CD8-positive, alpha-beta T cell (primary cell): ENCODE measurements at regions of chr6 and their contacts with region 1.

Region 1: GRCh38 chr6:40328405-40328987 is 258.7 kb downstream of the LRFN2 start:
- DNase-seq: peak in 6 of 9 experiments; percentile 12 to 65 (median 48)
- ATAC-seq: no peak
- H3K4me3 ChIP-seq: no peak overlapping the region
- H3K4me3 Mint-ChIP-seq: no peak overlapping the region
- H3K27ac ChIP-seq: no peak overlapping the region
- H3K27ac Mint-ChIP-seq: no peak overlapping the region
- H3K4me1 ChIP-seq: no peaks in the 10 kb centered on the region
- H3K4me1 Mint-ChIP-seq: no peaks in the 10 kb centered on the region
- H3K27me3 ChIP-seq: no peaks in the 10 kb centered on the region
- H3K27me3 Mint-ChIP-seq: peaks cover 20% of the 10 kb centered on the region
- CTCF ChIP-seq: peak; percentile 60

Region 2: GRCh38 chr6:40411881-40412280 is 83.4 kb after region 1 on chr6:
- CTCF ChIA-PET with region 1: no interaction called
- POLR2A ChIA-PET with region 1: no interaction called
- intact Hi-C with region 1: no loop called
- DNase-seq: no peak
- ATAC-seq: no peak
- H3K4me3 ChIP-seq: no peak overlapping the region
- H3K4me3 Mint-ChIP-seq: no peak overlapping the region
- H3K27ac ChIP-seq: no peak overlapping the region
- H3K27ac Mint-ChIP-seq: no peak overlapping the region
- H3K4me1 ChIP-seq: no peaks in the 10 kb centered on the region
- H3K4me1 Mint-ChIP-seq: no peaks in the 10 kb centered on the region
- H3K27me3 ChIP-seq: no peaks in the 10 kb centered on the region
- H3K27me3 Mint-ChIP-seq: no peaks in the 10 kb centered on the region
- CTCF ChIP-seq: no peak

Region 3: DNA sequence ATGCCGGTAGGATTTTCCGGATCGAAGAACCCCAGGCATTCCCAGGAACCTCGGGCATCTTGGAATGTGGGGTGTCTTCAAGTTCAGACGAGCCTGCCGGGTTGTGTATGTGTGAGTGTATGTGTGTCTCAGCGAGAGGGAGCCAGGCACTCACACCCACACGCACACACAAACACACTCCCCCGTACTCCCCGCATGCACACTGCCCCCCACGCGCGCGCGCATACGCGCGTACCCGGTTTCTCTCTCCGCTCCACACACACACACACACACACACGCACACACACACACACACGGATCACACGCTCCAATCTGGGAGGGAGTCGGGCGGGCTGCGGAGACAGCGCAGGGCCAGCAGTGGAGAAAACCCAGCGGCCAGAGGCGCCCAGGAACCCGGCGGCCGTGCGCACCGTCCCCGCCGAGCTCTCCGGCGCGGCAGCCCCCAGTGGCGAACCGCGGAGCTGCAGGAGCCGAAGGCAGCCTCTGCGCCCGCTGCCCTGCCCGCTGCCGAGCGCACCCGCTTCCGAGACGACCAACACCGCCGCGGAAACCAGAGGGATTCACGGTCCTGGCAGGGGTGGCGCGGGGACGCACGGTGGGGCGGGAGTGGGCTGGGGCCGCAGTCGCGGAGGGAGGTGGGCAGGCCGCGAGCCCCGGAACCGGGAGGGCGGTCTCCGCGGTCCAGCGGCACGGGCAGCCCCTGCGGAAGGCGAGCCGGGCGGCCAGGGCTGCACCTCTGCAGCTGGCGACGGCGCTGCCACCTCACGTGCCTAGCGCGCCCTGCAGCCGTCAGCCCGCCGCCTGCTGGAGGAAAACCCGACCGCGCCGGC is 259.0 kb after region 1 on chr6 and contains the start of gene LRFN2:
- CTCF ChIA-PET with region 1: interaction called, 17 read pairs
- POLR2A ChIA-PET with region 1: no interaction called
- intact Hi-C with region 1: loop called in 1 of 2 experiments (anchors 1 kb)
- DNase-seq: peak; percentile 27 to 79 (median 60)
- ATAC-seq: peak; percentile 88
- H3K4me3 ChIP-seq: peak within 1 kb of the TSS; percentile 50 to 53
- H3K4me3 Mint-ChIP-seq: peak within 1 kb of the TSS; percentile 79
- H3K27ac ChIP-seq: peak within 1 kb of the TSS in 1 of 2 experiments; percentile 19
- H3K27ac Mint-ChIP-seq: no peak within 1 kb of the TSS
- H3K4me1 ChIP-seq: peaks cover 25% of the 10 kb centered on the region
- H3K4me1 Mint-ChIP-seq: peaks cover 22% of the 10 kb centered on the region
- H3K27me3 ChIP-seq: no peaks in the 10 kb centered on the region
- H3K27me3 Mint-ChIP-seq: peaks cover 33% of the 10 kb centered on the region
- CTCF ChIP-seq: peak; percentile 62
- total RNA-seq, gene LRFN2: 0.11 TPM

Region 4: DNA sequence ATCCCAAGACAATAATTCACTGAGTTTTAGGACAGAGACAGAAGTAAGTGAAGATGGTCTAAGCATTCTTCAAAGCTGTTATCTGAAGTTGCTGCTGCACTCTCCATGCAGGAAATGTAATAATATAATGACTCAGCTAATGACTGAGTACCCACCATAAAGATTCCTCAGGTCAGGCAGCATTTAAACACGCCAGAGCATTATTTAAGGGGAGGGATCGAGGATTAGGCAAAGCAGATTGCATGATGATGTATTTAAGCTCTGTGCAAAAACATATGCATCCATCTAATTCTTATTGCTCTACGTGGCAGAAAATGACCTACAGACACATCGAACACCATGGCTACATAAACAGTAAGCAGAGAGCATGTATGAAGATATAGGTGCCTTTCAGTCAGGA is 494.1 kb after region 1 on chr6:
- CTCF ChIA-PET with region 1: no interaction called
- POLR2A ChIA-PET with region 1: no interaction called
- intact Hi-C with region 1: loop called in 1 of 2 experiments (anchors 5 kb)
- DNase-seq: no peak
- ATAC-seq: no peak
- H3K4me3 ChIP-seq: no peak overlapping the region
- H3K4me3 Mint-ChIP-seq: no peak overlapping the region
- H3K27ac ChIP-seq: no peak overlapping the region
- H3K27ac Mint-ChIP-seq: no peak overlapping the region
- H3K4me1 ChIP-seq: no peaks in the 10 kb centered on the region
- H3K4me1 Mint-ChIP-seq: no peaks in the 10 kb centered on the region
- H3K27me3 ChIP-seq: no peaks in the 10 kb centered on the region
- H3K27me3 Mint-ChIP-seq: peaks cover 14% of the 10 kb centered on the region
- CTCF ChIP-seq: no peak

Region 5: DNA sequence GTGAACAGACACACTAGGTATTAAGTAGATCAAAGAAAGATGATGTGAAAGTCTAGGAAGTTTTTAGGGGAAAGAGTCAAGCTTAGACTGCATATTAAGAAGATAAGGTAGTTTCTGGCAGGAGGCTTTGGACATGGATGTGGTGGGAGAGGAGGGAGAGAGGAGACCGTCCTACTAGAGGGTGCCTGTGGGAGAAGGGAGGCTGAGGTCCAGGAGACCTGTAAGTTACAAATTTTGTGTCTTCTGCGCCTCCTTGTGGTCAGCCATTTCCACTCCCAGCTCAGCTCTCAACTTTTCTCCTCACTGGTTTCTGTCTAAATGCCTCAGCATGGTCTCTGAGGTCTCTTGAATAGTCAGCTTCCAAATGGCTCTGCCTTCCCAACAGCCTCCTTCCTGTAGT is 517.1 kb after region 1 on chr6:
- CTCF ChIA-PET with region 1: no interaction called
- POLR2A ChIA-PET with region 1: no interaction called
- intact Hi-C with region 1: loop called (anchors 2 to 10 kb)
- DNase-seq: peak in 3 of 9 experiments; percentile 7 to 42 (median 38)
- ATAC-seq: no peak
- H3K4me3 ChIP-seq: no peak overlapping the region
- H3K4me3 Mint-ChIP-seq: no peak overlapping the region
- H3K27ac ChIP-seq: no peak overlapping the region
- H3K27ac Mint-ChIP-seq: no peak overlapping the region
- H3K4me1 ChIP-seq: no peaks in the 10 kb centered on the region
- H3K4me1 Mint-ChIP-seq: no peaks in the 10 kb centered on the region
- H3K27me3 ChIP-seq: no peaks in the 10 kb centered on the region
- H3K27me3 Mint-ChIP-seq: peaks cover 14% of the 10 kb centered on the region
- CTCF ChIP-seq: peak; percentile 35

Region 6: GRCh38 chr6:40894962-40895799 is 566.7 kb after region 1 on chr6:
- CTCF ChIA-PET with region 1: no interaction called
- POLR2A ChIA-PET with region 1: no interaction called
- intact Hi-C with region 1: loop called in 1 of 2 experiments (anchors 10 kb)
- DNase-seq: no peak
- ATAC-seq: no peak
- H3K4me3 ChIP-seq: no peak overlapping the region
- H3K4me3 Mint-ChIP-seq: no peak overlapping the region
- H3K27ac ChIP-seq: no peak overlapping the region
- H3K27ac Mint-ChIP-seq: no peak overlapping the region
- H3K4me1 ChIP-seq: no peaks in the 10 kb centered on the region
- H3K4me1 Mint-ChIP-seq: no peaks in the 10 kb centered on the region
- H3K27me3 ChIP-seq: no peaks in the 10 kb centered on the region
- H3K27me3 Mint-ChIP-seq: peaks cover 20% of the 10 kb centered on the region
- CTCF ChIP-seq: no peak

Region 7: DNA sequence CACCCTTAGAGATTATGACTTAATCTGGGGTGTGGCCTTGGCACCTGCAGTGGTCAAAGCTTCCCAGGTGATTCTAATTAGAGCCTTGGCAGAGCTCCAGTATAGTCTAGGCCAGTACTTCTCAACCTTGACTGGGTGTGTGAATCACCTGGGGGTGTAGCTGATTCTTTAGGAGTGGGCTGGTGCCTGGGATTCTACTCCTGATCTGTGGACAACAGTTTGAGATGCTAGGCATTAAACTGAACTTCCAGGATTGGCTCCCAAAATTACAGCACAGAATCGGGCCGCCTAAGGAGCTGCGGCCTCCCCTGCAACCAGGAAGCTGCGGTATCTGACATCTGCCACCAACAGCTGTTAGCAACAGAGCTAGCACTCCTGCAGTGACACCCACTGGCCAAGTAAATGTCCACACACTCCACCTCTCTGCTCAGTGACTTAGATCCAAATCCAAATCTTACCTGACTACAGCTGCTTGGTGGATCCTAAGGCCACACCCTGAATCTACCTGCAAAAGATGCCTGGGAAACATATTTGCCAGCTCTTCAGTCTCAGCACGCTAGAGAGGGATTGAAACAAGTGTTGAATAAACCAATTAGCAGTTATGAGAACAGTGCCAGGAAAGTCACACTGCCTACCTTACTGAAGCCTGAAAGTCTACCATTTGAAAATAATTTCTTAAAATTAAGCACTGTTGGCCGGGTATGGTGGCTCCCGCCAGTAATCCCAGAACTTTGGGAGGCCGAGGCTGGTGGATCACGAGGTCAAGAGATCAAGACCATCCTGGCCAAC is 583.9 kb after region 1 on chr6:
- CTCF ChIA-PET with region 1: no interaction called
- POLR2A ChIA-PET with region 1: no interaction called
- intact Hi-C with region 1: loop called in 1 of 2 experiments (anchors 5 kb)
- DNase-seq: peak in 3 of 9 experiments; percentile 3 to 48 (median 38)
- ATAC-seq: no peak
- H3K4me3 ChIP-seq: no peak overlapping the region
- H3K4me3 Mint-ChIP-seq: no peak overlapping the region
- H3K27ac ChIP-seq: no peak overlapping the region
- H3K27ac Mint-ChIP-seq: no peak overlapping the region
- H3K4me1 ChIP-seq: no peaks in the 10 kb centered on the region
- H3K4me1 Mint-ChIP-seq: no peaks in the 10 kb centered on the region
- H3K27me3 ChIP-seq: no peaks in the 10 kb centered on the region
- H3K27me3 Mint-ChIP-seq: peaks cover 5% of the 10 kb centered on the region
- CTCF ChIP-seq: no peak

Region 8: GRCh38 chr6:41066867-41067304 is 738.4 kb after region 1 on chr6:
- CTCF ChIA-PET with region 1: no interaction called
- POLR2A ChIA-PET with region 1: no interaction called
- intact Hi-C with region 1: loop called in 1 of 2 experiments (anchors 5 kb)
- DNase-seq: peak in 8 of 9 experiments; percentile 42 to 83 (median 70)
- ATAC-seq: no peak
- H3K4me3 ChIP-seq: no peak overlapping the region
- H3K4me3 Mint-ChIP-seq: no peak overlapping the region
- H3K27ac ChIP-seq: no peak overlapping the region
- H3K27ac Mint-ChIP-seq: no peak overlapping the region
- H3K4me1 ChIP-seq: peaks cover 8% of the 10 kb centered on the region
- H3K4me1 Mint-ChIP-seq: peaks cover 24% of the 10 kb centered on the region
- H3K27me3 ChIP-seq: no peaks in the 10 kb centered on the region
- H3K27me3 Mint-ChIP-seq: no peaks in the 10 kb centered on the region
- CTCF ChIP-seq: peak; percentile 94